ENCODE measurements at regions of chr11 and their contacts with region 1.

Region 1: DNA sequence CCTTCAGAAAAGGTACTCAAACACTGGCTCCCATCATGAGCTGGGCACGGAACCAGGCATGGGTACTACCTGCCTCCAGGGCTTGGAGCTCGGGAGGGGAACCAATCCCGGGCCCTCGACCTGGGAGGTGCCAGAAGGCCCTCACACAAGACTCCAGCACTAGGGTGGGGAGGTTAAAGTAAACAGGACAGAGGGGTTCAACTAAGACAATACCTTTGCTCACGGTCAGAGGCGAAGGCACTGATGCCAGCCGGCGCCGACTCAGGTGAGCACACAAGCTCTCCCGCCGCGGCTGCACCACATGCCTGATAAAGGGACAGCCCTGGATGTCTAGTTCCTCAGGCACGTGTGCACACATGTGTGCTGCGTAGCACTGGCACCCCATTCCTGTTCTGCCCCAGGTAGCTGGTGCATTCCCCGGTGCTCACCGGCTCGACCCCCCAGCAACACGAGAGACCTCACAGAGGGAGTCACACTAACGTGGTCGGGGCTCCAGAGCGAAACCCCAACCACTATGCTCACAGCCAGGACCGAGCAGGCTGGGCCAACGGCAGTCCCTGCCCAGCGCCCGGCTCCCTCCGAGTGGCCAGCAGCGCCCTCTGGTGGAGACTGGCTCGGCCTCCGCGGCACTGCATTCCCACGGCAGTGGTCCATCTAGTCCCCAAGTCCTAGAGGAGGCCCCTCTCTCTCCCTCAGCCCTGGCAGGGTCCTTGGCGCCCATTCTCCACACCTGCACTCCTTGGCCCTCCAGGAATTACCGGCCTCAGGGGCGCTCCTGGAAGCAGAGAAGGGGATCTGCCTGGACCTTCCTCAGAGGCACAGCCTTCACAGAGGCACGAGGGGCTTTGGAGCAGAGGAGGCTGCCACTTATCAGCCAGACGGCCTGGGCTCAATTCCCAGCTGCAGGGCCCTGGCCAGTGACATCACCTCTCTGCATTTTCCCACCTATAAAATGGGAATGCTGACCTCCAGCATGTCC is 28.8 kb upstream of the MOB2 start:
- DNase-seq: peak; percentile 74 to 82 (median 77)
- ATAC-seq: peak; percentile 93
- H3K4me3 ChIP-seq: no peak overlapping the region
- H3K27ac ChIP-seq: no peak overlapping the region
- H3K4me1 ChIP-seq: peaks cover 13 to 51% of the 10 kb centered on the region in 2 experiments
- H3K27me3 ChIP-seq: no peaks in the 10 kb centered on the region
- CTCF ChIP-seq: peak; percentile 86 to 89 (median 88)
- EP300 ChIP-seq: no peak
- POLR2A ChIP-seq: no peak
- RAD21 ChIP-seq: peak; percentile 56 to 82

Region 2: GRCh38 chr11:1202776-1203504 is 312.4 kb before region 1 on chr11:
- CTCF ChIA-PET with region 1: interaction called, 15 read pairs
- POLR2A ChIA-PET with region 1: interaction called, 4 read pairs
- in situ Hi-C with region 1: no loop called
- intact Hi-C with region 1: loop called (anchors 1 kb)
- DNase-seq: peak; percentile 67 to 91 (median 87)
- ATAC-seq: peak; percentile 95
- H3K4me3 ChIP-seq: no peak overlapping the region
- H3K27ac ChIP-seq: no peak overlapping the region
- H3K4me1 ChIP-seq: peaks cover 0 to 78% of the 10 kb centered on the region in 2 experiments; a peak in 2 of 5 replicates
- H3K27me3 ChIP-seq: peaks cover 12 to 80% of the 10 kb centered on the region in 2 experiments; a peak in 4 of 5 replicates
- CTCF ChIP-seq: peak; percentile 81 to 89 (median 85)
- EP300 ChIP-seq: no peak
- POLR2A ChIP-seq: no peak
- RAD21 ChIP-seq: peak; percentile 61 to 86

Region 3: DNA sequence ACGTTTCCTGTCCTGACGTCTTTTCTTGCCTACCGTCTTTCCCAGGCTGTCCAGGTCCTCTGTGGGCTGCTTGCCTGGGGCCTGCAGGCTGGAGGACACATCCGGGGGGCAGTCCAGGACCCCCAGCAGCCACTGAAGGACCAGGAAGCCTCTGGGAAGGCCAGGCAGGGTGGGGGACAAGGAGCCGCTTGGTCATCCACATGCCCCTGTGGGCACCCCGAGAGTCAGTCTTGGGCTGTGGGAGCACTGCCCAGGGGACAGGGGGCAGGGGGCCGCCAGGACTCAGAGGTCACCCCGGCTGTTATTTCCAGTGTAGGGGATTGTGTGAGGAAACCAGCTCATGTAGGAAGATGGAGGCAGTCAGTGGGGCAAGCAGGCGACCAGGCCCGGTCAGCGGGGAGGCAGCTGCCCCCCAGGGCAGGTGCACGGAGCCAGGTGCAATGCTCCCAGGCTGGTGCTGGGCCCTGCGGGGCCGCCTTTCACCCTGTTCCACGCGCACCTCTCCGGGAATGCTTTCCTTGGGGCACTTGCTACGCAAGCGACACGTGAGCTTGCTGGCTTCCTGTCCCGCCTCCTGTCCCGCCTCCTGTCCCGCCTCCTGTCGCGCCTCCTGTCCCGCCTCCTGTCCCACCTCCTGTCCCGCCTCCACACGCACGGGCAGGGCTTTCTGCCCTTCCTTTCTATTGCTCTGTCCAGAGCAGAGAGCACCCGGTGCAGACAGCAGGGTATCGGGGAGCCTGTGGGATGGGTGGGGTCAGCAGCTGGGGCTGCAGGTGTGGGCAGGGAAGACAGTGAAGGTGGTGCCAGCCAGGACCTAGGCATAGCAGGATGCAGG is 253.0 kb before region 1 on chr11:
- CTCF ChIA-PET with region 1: no interaction called
- POLR2A ChIA-PET with region 1: no interaction called
- in situ Hi-C with region 1: no loop called
- intact Hi-C with region 1: loop called (anchors 1 kb)
- DNase-seq: peak; percentile 83 to 91 (median 84)
- ATAC-seq: peak; percentile 90
- H3K4me3 ChIP-seq: peak overlapping the region; percentile 39
- H3K27ac ChIP-seq: peak overlapping the region; percentile 65
- H3K4me1 ChIP-seq: peaks cover 5 to 56% of the 10 kb centered on the region in 2 experiments; a peak in 4 of 5 replicates
- H3K27me3 ChIP-seq: no peaks in the 10 kb centered on the region
- CTCF ChIP-seq: no peak
- EP300 ChIP-seq: no peak
- POLR2A ChIP-seq: peak; percentile 86
- RAD21 ChIP-seq: no peak

Region 4: GRCh38 chr11:1458340-1459218 is 56.8 kb before region 1 on chr11:
- CTCF ChIA-PET with region 1: no interaction called
- POLR2A ChIA-PET with region 1: no interaction called
- in situ Hi-C with region 1: no loop called
- intact Hi-C with region 1: loop called (anchors 5 kb)
- DNase-seq: peak; percentile 72 to 89 (median 87)
- ATAC-seq: peak; percentile 92
- H3K4me3 ChIP-seq: no peak overlapping the region
- H3K27ac ChIP-seq: no peak overlapping the region
- H3K4me1 ChIP-seq: peaks cover 0 to 76% of the 10 kb centered on the region in 2 experiments; a peak in 2 of 5 replicates
- H3K27me3 ChIP-seq: peaks cover 0 to 16% of the 10 kb centered on the region in 2 experiments; a peak in 2 of 5 replicates
- CTCF ChIP-seq: peak in 2 of 3 experiments; percentile 15 to 30; a peak in 3 of 6 replicates
- EP300 ChIP-seq: no peak
- POLR2A ChIP-seq: no peak
- RAD21 ChIP-seq: peak in 1 of 2 experiments; percentile 27; a peak in 1 of 4 replicates

Region 5: GRCh38 chr11:1502954-1503707 is 12.2 kb before region 1 on chr11:
- CTCF ChIA-PET with region 1: no interaction called
- POLR2A ChIA-PET with region 1: no interaction called
- in situ Hi-C with region 1: no loop called
- intact Hi-C with region 1: no loop called
- DNase-seq: no peak
- ATAC-seq: no peak
- H3K4me3 ChIP-seq: no peak overlapping the region
- H3K27ac ChIP-seq: no peak overlapping the region
- H3K4me1 ChIP-seq: peaks cover 0 to 22% of the 10 kb centered on the region in 2 experiments; a peak in 2 of 5 replicates
- H3K27me3 ChIP-seq: no peaks in the 10 kb centered on the region
- CTCF ChIP-seq: no peak
- EP300 ChIP-seq: no peak
- POLR2A ChIP-seq: no peak
- RAD21 ChIP-seq: no peak

Measured in K562 (cell line).